Right ventricle myocardium inferior (tissue), 1 donor: ENCODE measurements at regions of chr4 and their contacts with region 1.

Region 1: GRCh38 chr4:3531879-3532713 is at the start of gene LRPAP1:
- DNase-seq: peak; percentile 97
- ATAC-seq: peak; percentile 94
- total RNA-seq, gene LRPAP1: 286 TPM

Region 2: GRCh38 chr4:3442959-3443749 is 88.9 kb before region 1 on chr4:
- intact Hi-C with region 1: no loop called
- DNase-seq: peak; percentile 71
- ATAC-seq: peak; percentile 54

Region 3: GRCh38 chr4:3480528-3481112 is 51.5 kb before region 1 on chr4:
- intact Hi-C with region 1: loop called (anchors 5 kb)
- DNase-seq: peak; percentile 88
- ATAC-seq: peak; percentile 24